Psoas muscle (tissue), 8 donors: ENCODE measurements at regions of chr10 and their contacts with region 1.

Region 1: DNA sequence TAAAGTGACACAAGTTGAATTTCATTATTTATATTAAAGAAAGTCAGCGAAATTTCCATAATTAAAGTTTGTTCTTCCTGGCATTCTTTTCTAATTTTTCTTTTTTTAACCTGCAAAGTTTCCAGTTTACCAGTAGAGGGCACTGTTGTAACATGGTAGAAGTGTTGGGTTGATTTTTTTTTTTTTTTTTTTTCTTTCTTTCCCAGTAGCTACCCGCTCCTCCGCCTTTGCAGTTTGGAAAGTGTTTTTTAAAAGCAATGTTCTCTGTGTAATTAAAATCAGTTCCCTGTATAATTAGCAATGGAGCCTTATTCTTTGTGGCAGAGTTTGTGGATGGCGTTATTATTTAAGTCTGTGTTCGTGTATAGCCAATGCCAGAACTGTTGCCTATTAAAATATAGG is 53.7 kb downstream of the TAF3 start:
- DNase-seq: no peak
- ATAC-seq: peak in 1 of 4 donors; percentile 50
- H3K4me3 ChIP-seq: peak overlapping the region; percentile 50
- H3K27ac ChIP-seq: no peak overlapping the region
- H3K4me1 ChIP-seq: no peaks in the 10 kb centered on the region
- H3K27me3 ChIP-seq: no peaks in the 10 kb centered on the region
- CTCF ChIP-seq: peak; percentile 84

Region 2: GRCh38 chr10:9209105-9209798 is 1337.2 kb after region 1 on chr10:
- intact Hi-C with region 1: loop called (anchors 1 to 5 kb)
- DNase-seq: peak; percentile 41 to 64
- ATAC-seq: peak in 1 of 4 donors; percentile 62
- H3K4me3 ChIP-seq: no peak overlapping the region
- H3K27ac ChIP-seq: no peak overlapping the region
- H3K4me1 ChIP-seq: no peaks in the 10 kb centered on the region
- H3K27me3 ChIP-seq: no peaks in the 10 kb centered on the region
- CTCF ChIP-seq: peak; percentile 95

Region 3: GRCh38 chr10:9302120-9302746 is 1430.2 kb after region 1 on chr10:
- intact Hi-C with region 1: loop called in 1 of 2 experiments (anchors 10 kb)
- DNase-seq: no peak
- ATAC-seq: no peak
- H3K4me3 ChIP-seq: no peak overlapping the region
- H3K27ac ChIP-seq: no peak overlapping the region
- H3K4me1 ChIP-seq: no peaks in the 10 kb centered on the region
- H3K27me3 ChIP-seq: no peaks in the 10 kb centered on the region
- CTCF ChIP-seq: peak; percentile 40